IMR-90 (cell line): ENCODE measurements at regions of chr1 and their contacts with region 1.

Region 1: DNA sequence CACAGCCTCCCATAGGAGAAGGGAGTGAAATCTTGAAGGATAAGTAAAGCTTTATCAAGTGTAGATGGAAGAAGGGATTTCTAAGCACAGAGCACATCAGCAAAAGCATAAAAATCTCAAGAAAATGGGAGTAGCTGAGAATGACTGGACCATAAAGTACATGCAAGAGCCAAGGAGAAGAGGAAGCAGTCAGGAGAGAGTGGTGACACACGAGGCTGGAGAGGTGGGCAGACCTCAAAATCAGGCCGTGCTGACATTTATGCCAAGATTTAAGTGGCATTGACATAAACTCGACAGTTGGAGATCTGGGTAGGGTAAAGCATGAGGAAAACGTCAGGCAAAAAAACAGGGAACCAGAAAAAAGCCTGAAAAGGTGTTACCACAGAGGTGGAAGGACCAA is 62.3 kb downstream of the GFI1 start:
- DNase-seq: no peak
- ATAC-seq: no peak
- H3K4me3 ChIP-seq: no peak overlapping the region
- H3K27ac ChIP-seq: no peak overlapping the region
- H3K4me1 ChIP-seq: no peaks in the 10 kb centered on the region
- H3K27me3 ChIP-seq: no peaks in the 10 kb centered on the region
- CTCF ChIP-seq: no peak
- POLR2A ChIP-seq: no peak
- RAD21 ChIP-seq: no peak

Region 2: DNA sequence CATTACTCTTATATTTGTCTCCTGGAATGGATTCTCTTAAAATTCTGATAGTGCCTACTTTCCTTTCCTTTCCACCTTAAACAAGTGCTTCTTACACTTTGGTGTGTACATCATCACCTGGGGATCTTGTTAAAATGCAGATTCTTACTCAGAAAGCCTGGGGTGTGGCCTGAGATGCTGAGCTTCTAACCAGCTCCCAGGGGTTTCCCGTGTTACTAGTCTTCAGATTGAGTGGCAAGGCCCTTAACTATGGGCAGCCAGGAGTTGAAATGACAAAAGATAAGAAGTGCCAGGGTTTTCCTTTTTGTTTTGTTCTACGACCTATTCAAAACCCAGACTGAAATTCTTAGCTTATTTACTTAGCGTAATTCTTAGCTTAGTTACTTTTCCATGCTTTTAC is 1178.9 kb before region 1 on chr1:
- CTCF ChIA-PET with region 1: no interaction called
- POLR2A ChIA-PET with region 1: no interaction called
- dilution Hi-C with region 1: no loop called
- in situ Hi-C with region 1: no loop called
- intact Hi-C with region 1: no loop called
- DNase-seq: no peak
- ATAC-seq: no peak
- H3K4me3 ChIP-seq: no peak overlapping the region
- H3K27ac ChIP-seq: no peak overlapping the region
- H3K4me1 ChIP-seq: no peaks in the 10 kb centered on the region
- H3K27me3 ChIP-seq: no peaks in the 10 kb centered on the region
- CTCF ChIP-seq: no peak
- POLR2A ChIP-seq: no peak
- RAD21 ChIP-seq: no peak

Region 3: DNA sequence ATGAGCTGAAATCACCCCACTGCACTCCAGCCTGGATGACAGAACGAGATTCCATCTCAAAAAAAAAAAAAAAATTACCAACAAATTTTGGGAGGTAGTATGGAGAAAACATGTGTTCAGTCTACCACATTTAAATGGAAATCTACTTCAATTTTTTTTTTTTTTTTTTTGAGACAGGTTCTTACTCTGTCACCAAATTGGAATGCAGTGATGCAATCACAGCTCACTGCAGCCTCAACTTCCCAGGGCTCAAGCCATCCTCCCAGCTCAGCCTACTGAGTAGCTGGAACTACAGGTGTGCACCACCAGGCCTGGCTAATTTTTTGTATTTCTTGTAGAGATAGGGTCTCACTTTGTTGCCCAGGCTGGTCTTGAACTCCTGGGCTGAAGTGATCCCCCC is 19.7 kb before region 1 on chr1:
- CTCF ChIA-PET with region 1: no interaction called
- POLR2A ChIA-PET with region 1: no interaction called
- dilution Hi-C with region 1: no loop called
- in situ Hi-C with region 1: no loop called
- intact Hi-C with region 1: loop called (anchors 2 kb)
- DNase-seq: peak; percentile 40
- ATAC-seq: no peak
- H3K4me3 ChIP-seq: no peak overlapping the region
- H3K27ac ChIP-seq: no peak overlapping the region
- H3K4me1 ChIP-seq: no peaks in the 10 kb centered on the region
- H3K27me3 ChIP-seq: 0 out of 2 replicates have a peak, but pooled peaks cover 2% of the 10 kb centered on the region
- CTCF ChIP-seq: no peak
- POLR2A ChIP-seq: no peak
- RAD21 ChIP-seq: no peak

Region 4: GRCh38 chr1:92411511-92411910 is 12.9 kb before region 1 on chr1:
- CTCF ChIA-PET with region 1: interaction called, 10 read pairs
- POLR2A ChIA-PET with region 1: no interaction called
- dilution Hi-C with region 1: no loop called
- in situ Hi-C with region 1: no loop called
- intact Hi-C with region 1: no loop called
- DNase-seq: peak; percentile 78
- ATAC-seq: peak; percentile 98
- H3K4me3 ChIP-seq: no peak overlapping the region
- H3K27ac ChIP-seq: no peak overlapping the region
- H3K4me1 ChIP-seq: no peaks in the 10 kb centered on the region
- H3K27me3 ChIP-seq: 0 out of 2 replicates have a peak, but pooled peaks cover 2% of the 10 kb centered on the region
- CTCF ChIP-seq: no peak
- POLR2A ChIP-seq: no peak
- RAD21 ChIP-seq: no peak